CD14-positive monocyte (primary cell): ENCODE measurements at regions of chr10 and their contacts with region 1.

Region 1: GRCh38 chr10:19412531-19412930 is 363.9 kb downstream of the MALRD1 start:
- DNase-seq: peak in 2 of 3 donors; percentile 4 to 10
- H3K4me3 ChIP-seq: no peak overlapping the region
- H3K4me3 Mint-ChIP-seq: no peak overlapping the region
- H3K27ac ChIP-seq: no peak overlapping the region
- H3K27ac Mint-ChIP-seq: no peak overlapping the region
- H3K4me1 ChIP-seq: no peaks in the 10 kb centered on the region
- H3K4me1 Mint-ChIP-seq: no peaks in the 10 kb centered on the region
- H3K27me3 ChIP-seq: no peaks in the 10 kb centered on the region
- H3K27me3 Mint-ChIP-seq: peaks cover 0 to 5% (median 0%) of the 10 kb centered on the region in 3 donors
- CTCF ChIP-seq: peak; percentile 52

Region 2: DNA sequence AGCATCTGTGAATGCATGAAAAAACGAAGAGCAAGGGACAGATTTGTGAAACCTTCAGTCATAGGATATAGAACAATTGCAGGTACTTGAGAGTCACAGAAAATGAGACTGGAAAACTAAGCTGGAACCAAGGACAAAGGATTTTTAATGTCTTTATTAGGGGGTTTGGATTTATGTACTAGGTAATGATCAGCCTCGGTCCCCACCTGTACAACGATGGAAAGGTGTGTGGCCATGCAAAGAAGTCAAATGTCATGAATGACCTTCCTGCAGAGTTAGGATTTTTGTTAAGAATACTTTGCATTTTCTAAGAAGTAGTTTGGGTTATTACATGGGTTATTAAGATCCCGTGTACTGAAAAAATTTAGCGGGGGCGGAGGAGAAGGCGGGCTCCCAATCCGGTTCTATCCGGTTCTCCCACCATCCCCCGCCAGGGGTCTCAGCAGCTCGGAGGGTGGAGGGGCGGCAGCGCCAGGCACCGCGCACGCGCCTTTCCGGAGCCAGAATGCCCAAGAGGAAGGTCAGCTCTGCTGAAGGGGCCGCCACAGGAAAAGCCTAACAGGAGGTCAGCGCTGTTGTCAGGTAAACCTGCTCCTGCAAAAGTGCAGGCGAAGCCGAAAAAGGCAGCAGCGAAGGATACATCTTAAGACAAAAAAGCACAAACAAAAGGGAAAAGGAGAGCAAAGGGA is 76.2 kb after region 1 on chr10:
- intact Hi-C with region 1: no loop called
- DNase-seq: peak in 1 of 3 donors; percentile 4
- H3K4me3 ChIP-seq: peak overlapping the region in 2 of 3 experiments; percentile 16 to 62
- H3K4me3 Mint-ChIP-seq: peak overlapping the region; percentile 65 to 94
- H3K27ac ChIP-seq: no peak overlapping the region
- H3K27ac Mint-ChIP-seq: peak overlapping the region in 1 of 7 donors; percentile 56
- H3K4me1 ChIP-seq: no peaks in the 10 kb centered on the region
- H3K4me1 Mint-ChIP-seq: peaks cover 22% of the 10 kb centered on the region
- H3K27me3 ChIP-seq: no peaks in the 10 kb centered on the region
- H3K27me3 Mint-ChIP-seq: peaks cover 0 to 3% (median 1%) of the 10 kb centered on the region in 3 donors
- CTCF ChIP-seq: no peak

Region 3: GRCh38 chr10:19788075-19788686 is 375.6 kb after region 1 on chr10:
- intact Hi-C with region 1: loop called in 1 of 2 experiments (anchors 10 kb)
- DNase-seq: peak; percentile 28 to 60 (median 45)
- H3K4me3 ChIP-seq: no peak overlapping the region
- H3K4me3 Mint-ChIP-seq: peak overlapping the region in 1 of 2 donors; percentile 12
- H3K27ac ChIP-seq: no peak overlapping the region
- H3K27ac Mint-ChIP-seq: no peak overlapping the region
- H3K4me1 ChIP-seq: peaks cover 8 to 13% of the 10 kb centered on the region in 2 donors
- H3K4me1 Mint-ChIP-seq: peaks cover 22% of the 10 kb centered on the region
- H3K27me3 ChIP-seq: no peaks in the 10 kb centered on the region
- H3K27me3 Mint-ChIP-seq: peaks cover 0 to 2% (median 0%) of the 10 kb centered on the region in 3 donors
- CTCF ChIP-seq: peak; percentile 98